ENCODE measurements at regions of chr6 and their contacts with region 1.

Region 1: GRCh38 chr6:13908955-13909381 is 15.8 kb upstream of the RNF182 start:
- DNase-seq: peak; percentile 88
- H3K4me3 ChIP-seq: no peak overlapping the region
- H3K27ac ChIP-seq: peak overlapping the region; percentile 82
- H3K4me1 ChIP-seq: peaks cover 37% of the 10 kb centered on the region
- H3K27me3 ChIP-seq: no peaks in the 10 kb centered on the region
- CTCF ChIP-seq: peak; percentile 78

Region 2: DNA sequence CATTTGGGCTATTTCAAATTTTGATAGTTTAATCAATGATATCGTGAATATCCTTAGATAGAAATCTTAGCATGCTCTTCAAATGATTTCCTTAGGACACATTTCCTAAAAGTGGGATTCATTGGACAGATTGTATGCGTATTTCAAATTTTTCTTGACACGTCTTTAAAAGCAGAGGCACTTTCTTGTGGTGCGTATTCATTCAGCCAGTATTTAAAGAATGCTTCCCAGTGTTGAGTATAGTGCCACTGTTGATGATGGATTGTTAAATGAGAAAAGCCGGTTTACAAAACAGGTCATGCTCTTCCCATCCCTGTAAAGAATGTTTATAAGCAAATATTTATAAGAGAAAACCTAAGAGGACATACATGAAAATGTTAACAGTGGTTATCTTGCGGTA is 308.9 kb before region 1 on chr6:
- CTCF ChIA-PET with region 1: no interaction called
- POLR2A ChIA-PET with region 1: no interaction called
- intact Hi-C with region 1: no loop called
- DNase-seq: no peak
- H3K4me3 ChIP-seq: no peak overlapping the region
- H3K27ac ChIP-seq: no peak overlapping the region
- H3K4me1 ChIP-seq: no peaks in the 10 kb centered on the region
- H3K27me3 ChIP-seq: no peaks in the 10 kb centered on the region
- CTCF ChIP-seq: no peak

Region 3: DNA sequence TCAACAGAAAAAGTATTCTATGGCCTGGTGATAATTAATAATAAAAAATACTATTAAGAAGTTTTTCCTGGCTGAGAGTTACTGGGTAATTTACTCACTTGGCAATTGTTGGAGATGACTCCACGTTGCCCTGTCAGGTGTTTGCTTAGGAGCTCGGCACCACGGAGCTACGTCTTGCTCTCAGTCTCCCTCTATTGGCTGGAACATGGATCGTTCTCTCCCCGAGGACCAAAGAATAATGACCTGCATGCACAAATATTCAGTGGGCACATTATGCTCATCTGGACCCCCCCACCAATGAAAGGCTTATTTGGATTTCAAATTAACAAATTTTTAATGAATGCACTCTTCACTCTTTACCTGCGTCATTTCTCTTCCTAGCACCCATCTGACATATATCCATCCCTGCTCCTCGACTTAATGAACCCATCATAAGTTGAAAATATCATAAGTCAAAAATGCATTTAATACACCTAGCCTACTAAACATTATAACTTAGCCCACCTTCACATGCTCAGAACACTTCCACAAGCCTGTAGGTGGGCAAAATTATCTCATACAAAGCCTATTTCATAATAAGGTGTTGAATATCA is 137.6 kb after region 1 on chr6:
- CTCF ChIA-PET with region 1: interaction called, 11 read pairs
- POLR2A ChIA-PET with region 1: no interaction called
- intact Hi-C with region 1: loop called (anchors 2 kb)
- DNase-seq: peak; percentile 66
- H3K4me3 ChIP-seq: no peak overlapping the region
- H3K27ac ChIP-seq: no peak overlapping the region
- H3K4me1 ChIP-seq: peaks cover 3% of the 10 kb centered on the region
- H3K27me3 ChIP-seq: no peaks in the 10 kb centered on the region
- CTCF ChIP-seq: peak; percentile 83

Region 4: DNA sequence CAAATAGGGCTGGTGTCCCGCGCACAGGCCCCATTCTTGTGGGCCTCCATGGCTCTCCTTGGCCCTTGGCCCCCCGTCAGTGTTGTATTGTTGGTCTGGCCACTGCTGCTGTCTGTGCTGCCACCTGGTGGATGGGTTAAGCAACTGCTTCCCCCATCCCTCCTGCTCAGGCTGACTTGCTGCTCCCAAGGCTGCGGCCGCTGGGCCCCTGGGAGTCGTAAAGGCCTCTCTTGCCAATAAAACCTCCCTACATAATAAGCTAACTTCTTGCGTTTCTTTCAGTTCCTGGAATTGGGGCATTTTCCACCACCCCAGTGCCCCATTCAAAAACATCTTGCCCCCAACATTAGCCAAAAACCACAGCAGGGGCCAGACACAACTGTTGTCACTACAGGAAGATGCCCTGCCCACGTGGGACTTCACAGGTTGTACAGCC is 235.7 kb after region 1 on chr6:
- CTCF ChIA-PET with region 1: no interaction called
- POLR2A ChIA-PET with region 1: no interaction called
- intact Hi-C with region 1: loop called (anchors 1 kb)
- DNase-seq: peak; percentile 92
- H3K4me3 ChIP-seq: no peak overlapping the region
- H3K27ac ChIP-seq: no peak overlapping the region
- H3K4me1 ChIP-seq: peaks cover 61% of the 10 kb centered on the region
- H3K27me3 ChIP-seq: no peaks in the 10 kb centered on the region
- CTCF ChIP-seq: peak; percentile 97

Region 5: DNA sequence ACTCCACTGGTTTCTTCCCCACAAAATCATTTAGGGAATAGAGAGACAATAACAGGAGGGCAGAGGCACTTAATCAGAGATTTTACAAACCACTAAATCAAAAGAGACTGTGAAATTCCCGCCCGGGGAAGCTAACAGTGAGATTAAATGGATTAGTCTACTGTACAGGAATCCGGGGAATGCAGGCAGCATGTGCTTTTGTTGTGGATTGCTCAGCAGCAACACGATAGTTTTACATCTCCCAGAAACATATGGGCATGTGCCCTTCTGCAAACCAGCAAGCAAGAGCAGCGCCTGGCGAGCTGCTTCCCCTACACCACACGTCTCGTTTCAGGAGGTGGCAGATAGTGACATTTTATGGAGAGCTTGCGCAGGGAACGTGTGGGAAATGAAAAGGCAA is 590.9 kb after region 1 on chr6:
- CTCF ChIA-PET with region 1: interaction called, 5 read pairs
- POLR2A ChIA-PET with region 1: no interaction called
- intact Hi-C with region 1: loop called (anchors 2 kb)
- DNase-seq: peak; percentile 90
- H3K4me3 ChIP-seq: no peak overlapping the region
- H3K27ac ChIP-seq: peak overlapping the region; percentile 15
- H3K4me1 ChIP-seq: peaks cover 27% of the 10 kb centered on the region
- H3K27me3 ChIP-seq: no peaks in the 10 kb centered on the region
- CTCF ChIP-seq: 0 out of 2 replicates have a peak, but pooled peaks have one; percentile 18